ENCODE measurements at regions of chr4 and their contacts with region 1.

Region 1: GRCh38 chr4:18593445-18594002 is 572.0 kb upstream of the LCORL start:
- DNase-seq: peak; percentile 74
- ATAC-seq: peak; percentile 89
- H3K4me3 ChIP-seq: peak overlapping the region; percentile 9; the same call in 1 of the 2 replicates
- H3K27ac ChIP-seq: no peak overlapping the region
- H3K4me1 ChIP-seq: no peaks in the 10 kb centered on the region
- H3K27me3 ChIP-seq: peaks cover 1% of the 10 kb centered on the region; the same call in 1 of the 2 replicates
- CTCF ChIP-seq: peak; percentile 85
- POLR2A ChIP-seq: no peak
- RAD21 ChIP-seq: peak; percentile 89

Region 2: DNA sequence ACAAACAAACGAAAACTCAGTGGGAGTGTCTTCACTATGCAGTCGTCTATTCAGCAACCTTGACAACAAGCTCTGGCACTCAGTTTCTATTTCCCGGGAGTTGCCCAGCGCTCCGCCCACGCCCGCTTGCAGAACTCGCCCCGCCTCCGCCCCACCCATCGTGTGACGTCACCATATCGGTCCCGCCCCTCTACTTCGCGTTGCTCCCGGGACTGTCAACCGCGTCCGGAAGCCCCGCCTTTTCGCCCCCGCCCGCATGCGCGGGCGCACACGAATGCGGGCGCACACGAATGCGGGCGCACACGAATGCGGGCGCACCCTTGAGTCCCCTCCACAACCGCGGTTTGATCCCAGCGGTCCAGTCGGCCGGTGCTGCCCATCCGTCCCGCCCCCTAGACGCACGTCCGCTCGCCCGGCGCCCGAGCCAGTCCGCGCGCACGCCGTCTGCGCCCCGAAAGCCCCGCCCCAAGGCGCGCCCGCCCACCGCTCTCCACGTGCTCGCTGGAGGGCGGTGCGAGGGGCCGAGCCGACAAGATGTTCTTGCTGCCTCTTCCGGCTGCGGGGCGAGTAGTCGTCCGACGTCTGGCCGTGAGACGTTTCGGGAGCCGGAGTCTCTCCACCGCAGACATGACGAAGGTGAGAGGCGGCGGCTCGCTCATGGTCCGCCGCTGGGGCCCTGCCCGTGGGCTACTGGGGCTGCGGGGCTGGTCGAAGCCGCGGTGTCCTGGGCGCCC is 1016.4 kb before region 1 on chr4 and contains the start of gene LAP3:
- CTCF ChIA-PET with region 1: no interaction called
- POLR2A ChIA-PET with region 1: no interaction called
- dilution Hi-C with region 1: no loop called
- in situ Hi-C with region 1: no loop called
- intact Hi-C with region 1: loop called (anchors 1 kb)
- DNase-seq: peak; percentile 96
- ATAC-seq: peak; percentile 97
- H3K4me3 ChIP-seq: peak within 1 kb of the TSS; percentile 65
- H3K27ac ChIP-seq: peak within 1 kb of the TSS; percentile 62
- H3K4me1 ChIP-seq: peaks cover 6% of the 10 kb centered on the region; the same call in 1 of the 2 replicates
- H3K27me3 ChIP-seq: no peaks in the 10 kb centered on the region
- CTCF ChIP-seq: 0 out of 2 replicates have a peak, but pooled peaks have one; percentile 1
- POLR2A ChIP-seq: peak; percentile 95
- RAD21 ChIP-seq: no peak
- total RNA-seq, gene LAP3: 91.6 and 93.0 TPM in 2 replicates

Region 3: GRCh38 chr4:17702641-17703040 is 890.9 kb before region 1 on chr4:
- CTCF ChIA-PET with region 1: no interaction called
- POLR2A ChIA-PET with region 1: no interaction called
- dilution Hi-C with region 1: no loop called
- in situ Hi-C with region 1: no loop called
- intact Hi-C with region 1: no loop called
- DNase-seq: no peak
- ATAC-seq: no peak
- H3K4me3 ChIP-seq: no peak overlapping the region
- H3K27ac ChIP-seq: no peak overlapping the region
- H3K4me1 ChIP-seq: no peaks in the 10 kb centered on the region
- H3K27me3 ChIP-seq: no peaks in the 10 kb centered on the region
- CTCF ChIP-seq: no peak
- POLR2A ChIP-seq: no peak
- RAD21 ChIP-seq: no peak

Region 4: DNA sequence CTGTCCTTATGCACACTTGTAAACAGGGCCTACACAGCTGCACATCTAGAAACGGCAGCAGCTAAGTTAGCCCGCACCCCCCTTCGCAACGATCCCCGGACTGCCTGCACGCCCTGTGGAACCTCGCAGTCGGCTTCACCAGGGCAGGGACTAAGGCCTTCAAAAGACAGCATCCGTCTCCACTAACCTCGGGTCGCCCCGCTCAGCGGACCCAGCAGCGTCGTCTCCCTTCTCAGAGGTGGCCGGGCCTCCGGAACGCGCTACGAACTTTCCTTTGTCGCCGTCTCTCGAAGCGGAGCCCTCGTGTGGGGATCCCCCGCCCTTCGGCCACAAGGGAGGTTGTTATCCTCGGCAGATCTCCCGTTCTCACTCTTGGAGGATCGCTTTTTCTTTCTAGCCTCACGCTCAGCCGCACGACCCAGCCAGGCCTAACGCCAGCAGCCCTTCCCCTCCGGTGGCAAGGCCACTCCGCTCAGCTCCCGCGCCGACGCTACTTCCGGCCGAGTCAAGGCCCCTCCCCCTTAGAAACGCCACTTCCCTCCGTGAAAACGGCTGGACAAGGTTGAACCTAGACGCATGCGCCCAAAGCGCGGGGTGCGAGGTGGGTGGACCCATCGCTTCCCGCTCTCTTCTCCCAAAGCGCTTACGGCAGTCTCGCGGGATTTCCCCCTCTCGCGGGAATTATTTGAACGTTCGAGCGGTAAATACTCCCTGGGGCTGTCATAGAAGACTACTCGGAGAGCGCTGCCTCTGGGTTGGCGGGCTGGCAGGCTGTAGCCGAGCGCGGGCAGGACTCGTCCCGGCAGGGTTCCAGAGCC is 783.1 kb before region 1 on chr4 and contains the starts of genes DCAF16 and NCAPG:
- CTCF ChIA-PET with region 1: no interaction called
- POLR2A ChIA-PET with region 1: no interaction called
- dilution Hi-C with region 1: no loop called
- in situ Hi-C with region 1: loop called (anchors 10 kb)
- intact Hi-C with region 1: loop called (anchors 2 kb)
- DNase-seq: peak; percentile 99
- ATAC-seq: peak; percentile 92
- H3K4me3 ChIP-seq: peak within 1 kb of the TSS; percentile 82
- H3K27ac ChIP-seq: peak within 1 kb of the TSS; percentile 86
- H3K4me1 ChIP-seq: peaks cover 2% of the 10 kb centered on the region; the same call in 1 of the 2 replicates
- H3K27me3 ChIP-seq: no peaks in the 10 kb centered on the region
- CTCF ChIP-seq: no peak
- POLR2A ChIP-seq: peak; percentile 97
- RAD21 ChIP-seq: no peak
- total RNA-seq, gene DCAF16: 23.6 and 31.5 TPM in 2 replicates
- total RNA-seq, gene NCAPG: 26.7 and 41.7 TPM in 2 replicates

Region 5: GRCh38 chr4:17920681-17921080 is 672.8 kb before region 1 on chr4:
- CTCF ChIA-PET with region 1: no interaction called
- POLR2A ChIA-PET with region 1: no interaction called
- dilution Hi-C with region 1: no loop called
- in situ Hi-C with region 1: loop called (anchors 10 kb)
- intact Hi-C with region 1: no loop called
- DNase-seq: no peak
- ATAC-seq: no peak
- H3K4me3 ChIP-seq: no peak overlapping the region
- H3K27ac ChIP-seq: no peak overlapping the region
- H3K4me1 ChIP-seq: no peaks in the 10 kb centered on the region
- H3K27me3 ChIP-seq: no peaks in the 10 kb centered on the region
- CTCF ChIP-seq: no peak
- POLR2A ChIP-seq: no peak
- RAD21 ChIP-seq: no peak

Region 6: DNA sequence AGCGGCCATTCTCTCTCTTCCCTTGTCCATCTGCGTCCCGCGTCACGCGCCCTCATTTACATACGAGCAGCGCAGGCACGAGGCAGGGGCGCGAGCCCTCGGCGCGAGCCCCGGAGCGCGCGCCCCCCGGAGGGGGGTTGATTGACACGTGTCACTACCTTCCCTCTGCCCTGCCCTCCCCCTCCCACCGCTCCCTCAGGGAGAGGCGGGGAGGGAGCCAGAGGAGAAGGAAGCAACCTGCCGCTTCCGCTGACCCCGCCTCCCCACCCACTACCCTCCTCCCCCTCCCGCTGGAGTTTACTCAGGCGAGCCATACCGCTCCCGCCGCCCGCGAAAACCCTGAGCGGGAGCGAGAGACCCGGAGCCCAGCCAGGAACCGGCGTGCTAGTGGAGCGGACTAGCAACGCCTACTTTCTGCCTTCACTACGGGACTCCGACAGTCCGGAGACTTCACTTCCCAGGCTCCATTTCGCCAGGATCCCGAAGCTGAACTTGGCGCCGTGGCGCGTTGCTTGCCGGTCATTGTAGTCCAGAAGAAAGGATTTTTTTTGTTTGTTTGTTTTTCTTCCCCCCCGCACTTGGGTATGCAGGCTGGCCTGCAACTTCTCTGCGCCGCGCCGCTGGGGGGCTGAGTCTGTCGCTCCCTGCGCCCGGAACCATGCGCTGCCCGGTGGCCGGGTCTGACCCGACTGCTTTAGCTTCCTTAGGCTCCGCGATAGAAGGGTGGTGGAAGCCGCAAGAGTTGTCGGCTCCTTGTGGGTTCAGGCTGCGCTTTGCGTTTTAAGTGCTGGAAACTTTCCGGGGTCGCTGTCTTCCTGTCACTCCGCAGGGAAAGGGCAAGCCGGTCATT is 571.6 kb before region 1 on chr4 and contains the start of gene LCORL:
- CTCF ChIA-PET with region 1: no interaction called
- POLR2A ChIA-PET with region 1: no interaction called
- dilution Hi-C with region 1: no loop called
- in situ Hi-C with region 1: no loop called
- intact Hi-C with region 1: loop called (anchors 2 kb)
- DNase-seq: peak; percentile 95
- ATAC-seq: peak; percentile 86
- H3K4me3 ChIP-seq: peak within 1 kb of the TSS; percentile 82
- H3K27ac ChIP-seq: peak within 1 kb of the TSS; percentile 57
- H3K4me1 ChIP-seq: no peaks in the 10 kb centered on the region
- H3K27me3 ChIP-seq: no peaks in the 10 kb centered on the region
- CTCF ChIP-seq: no peak; the same call in 1 of the 2 replicates
- POLR2A ChIP-seq: no peak
- RAD21 ChIP-seq: 0 out of 2 replicates have a peak, but pooled peaks have one; percentile 1
- total RNA-seq, gene LCORL: 5.0 and 11.4 TPM in 2 replicates